Ascending aorta (tissue), 2 donors: ENCODE measurements at regions of chr22 and their contacts with region 1.

Region 1: GRCh38 chr22:42369245-42370041 is 62.8 kb downstream of the NFAM1 start:
- DNase-seq: peak; percentile 85 to 94
- H3K4me3 ChIP-seq: peak overlapping the region; percentile 65 to 66
- H3K27ac ChIP-seq: no peak overlapping the region
- H3K4me1 ChIP-seq: peaks cover 20 to 37% of the 10 kb centered on the region in 2 donors
- H3K27me3 ChIP-seq: no peaks in the 10 kb centered on the region
- CTCF ChIP-seq: no peak

Region 2: DNA sequence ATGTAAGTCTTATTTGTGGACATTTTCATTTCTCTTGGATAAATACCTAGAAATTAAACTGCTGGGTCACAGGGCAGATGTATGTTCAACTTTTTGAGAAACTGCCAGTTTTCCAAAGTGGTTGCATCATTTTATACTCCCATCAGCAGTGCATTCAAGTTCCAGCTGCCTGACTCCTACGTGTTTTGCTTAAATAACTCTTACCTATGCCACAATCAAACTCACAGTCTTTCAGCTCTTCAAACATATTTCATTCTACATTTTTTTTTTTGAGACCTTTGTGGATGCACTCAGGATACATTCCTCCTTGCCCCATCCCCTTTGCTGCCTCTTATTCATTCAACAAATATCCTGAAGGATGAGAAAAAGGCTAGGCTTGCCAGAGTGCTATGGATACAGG is 108.1 kb before region 1 on chr22:
- intact Hi-C with region 1: no loop called
- DNase-seq: no peak
- H3K4me3 ChIP-seq: no peak overlapping the region
- H3K27ac ChIP-seq: no peak overlapping the region
- H3K4me1 ChIP-seq: peaks cover 0 to 2% of the 10 kb centered on the region in 2 donors
- H3K27me3 ChIP-seq: no peaks in the 10 kb centered on the region
- CTCF ChIP-seq: no peak

Region 3: GRCh38 chr22:42343551-42344081 is 25.8 kb before region 1 on chr22:
- intact Hi-C with region 1: loop called (anchors 1 kb)
- DNase-seq: no peak
- H3K4me3 ChIP-seq: peak overlapping the region; percentile 54 to 71
- H3K27ac ChIP-seq: peak overlapping the region; percentile 77 to 81
- H3K4me1 ChIP-seq: peaks cover 0 to 6% of the 10 kb centered on the region in 2 donors
- H3K27me3 ChIP-seq: no peaks in the 10 kb centered on the region
- CTCF ChIP-seq: no peak